ENCODE measurements at regions of chr10 and their contacts with region 1.

Region 1: DNA sequence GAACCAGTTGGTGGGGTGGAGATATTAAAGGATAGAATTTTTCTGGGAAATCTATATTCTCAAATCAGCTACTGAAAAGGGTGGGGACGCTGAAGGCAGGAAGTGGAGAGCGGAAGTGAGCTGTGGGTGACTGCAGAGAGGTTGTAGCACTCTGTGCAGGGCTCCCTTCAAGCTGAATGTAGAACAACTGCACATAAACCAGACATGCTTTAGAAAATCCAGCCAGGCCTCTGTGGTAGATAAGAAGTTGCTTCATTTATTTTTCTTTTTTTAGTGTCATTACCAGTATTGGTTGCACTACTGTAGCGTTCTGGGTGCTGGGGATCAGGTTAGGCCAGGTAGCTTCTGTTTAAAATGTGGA is 127.8 kb downstream of the CELF2 start:
- DNase-seq: peak in 1 of 2 donors; percentile 36
- ATAC-seq: no peak
- H3K4me3 ChIP-seq: no peak overlapping the region
- H3K27ac ChIP-seq: no peak overlapping the region
- H3K4me1 ChIP-seq: peaks cover 36 to 49% of the 10 kb centered on the region in 2 donors
- H3K27me3 ChIP-seq: no peaks in the 10 kb centered on the region
- CTCF ChIP-seq: no peak
- POLR2A ChIP-seq: no peak

Region 2: GRCh38 chr10:11194859-11195586 is 49.5 kb after region 1 on chr10:
- in situ Hi-C with region 1: no loop called
- intact Hi-C with region 1: loop called (anchors 5 kb)
- DNase-seq: no peak
- ATAC-seq: no peak
- H3K4me3 ChIP-seq: no peak overlapping the region
- H3K27ac ChIP-seq: no peak overlapping the region
- H3K4me1 ChIP-seq: peaks cover 21 to 23% of the 10 kb centered on the region in 2 donors
- H3K27me3 ChIP-seq: no peaks in the 10 kb centered on the region
- CTCF ChIP-seq: no peak
- POLR2A ChIP-seq: no peak